Left cardiac atrium (tissue), 4 donors: ENCODE measurements at regions of chr12 and their contacts with region 1.

Region 1: GRCh38 chr12:107448198-107448597 is 237.4 kb upstream of the PWP1 start:
- DNase-seq: no peak
- ATAC-seq: no peak

Region 2: GRCh38 chr12:107379852-107380567 is 68.2 kb before region 1 on chr12:
- intact Hi-C with region 1: no loop called
- DNase-seq: no peak
- ATAC-seq: no peak

Region 3: DNA sequence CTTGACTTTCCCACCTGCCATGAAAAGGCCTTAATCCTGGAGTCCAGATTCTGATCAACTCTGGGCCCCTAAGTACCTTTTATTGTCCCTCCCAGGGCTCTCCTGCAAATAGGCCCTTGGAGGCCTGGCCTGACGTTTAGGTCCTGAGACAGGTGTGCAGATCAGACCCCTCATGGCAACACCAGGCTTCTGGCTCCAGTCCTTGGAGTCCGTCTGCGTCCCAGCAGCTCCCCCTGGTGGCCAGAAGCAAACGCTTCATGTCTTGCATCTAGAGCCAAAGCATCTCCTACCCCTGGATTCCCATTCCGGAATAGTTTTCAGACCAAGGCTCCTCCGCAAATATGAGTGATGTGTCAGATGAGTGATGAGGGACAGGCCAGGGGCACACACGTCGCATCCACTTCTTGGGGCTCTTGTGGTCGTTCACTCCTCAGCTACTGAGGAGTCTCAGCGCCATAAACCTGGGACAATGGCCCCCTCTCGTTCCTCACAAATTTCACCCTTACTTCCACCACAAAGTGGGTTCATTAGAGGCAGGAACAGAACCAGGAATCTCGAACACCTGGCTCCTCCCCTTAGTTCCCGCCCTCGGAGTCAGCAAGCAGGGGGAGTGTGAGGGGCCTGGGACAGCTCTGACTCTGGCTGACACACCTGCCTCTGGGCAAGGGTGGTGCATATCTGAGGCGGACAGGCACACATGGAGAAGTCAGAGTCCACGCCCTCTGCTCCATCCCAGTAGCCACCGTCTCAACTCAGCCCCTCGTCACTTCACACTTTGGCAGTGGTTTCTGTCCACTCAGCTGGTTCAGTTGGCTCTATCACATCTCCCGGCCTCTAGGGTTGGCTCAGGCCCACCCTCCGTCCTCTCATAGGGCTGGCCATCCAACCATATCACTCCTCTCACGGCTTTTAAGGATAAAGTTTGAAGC is 159.5 kb after region 1 on chr12:
- intact Hi-C with region 1: loop called in 1 of 2 experiments (anchors 10 kb)
- DNase-seq: peak; percentile 81
- ATAC-seq: peak; percentile 78 to 87